ENCODE measurements at regions of chr7 and their contacts with region 1.

Region 1: DNA sequence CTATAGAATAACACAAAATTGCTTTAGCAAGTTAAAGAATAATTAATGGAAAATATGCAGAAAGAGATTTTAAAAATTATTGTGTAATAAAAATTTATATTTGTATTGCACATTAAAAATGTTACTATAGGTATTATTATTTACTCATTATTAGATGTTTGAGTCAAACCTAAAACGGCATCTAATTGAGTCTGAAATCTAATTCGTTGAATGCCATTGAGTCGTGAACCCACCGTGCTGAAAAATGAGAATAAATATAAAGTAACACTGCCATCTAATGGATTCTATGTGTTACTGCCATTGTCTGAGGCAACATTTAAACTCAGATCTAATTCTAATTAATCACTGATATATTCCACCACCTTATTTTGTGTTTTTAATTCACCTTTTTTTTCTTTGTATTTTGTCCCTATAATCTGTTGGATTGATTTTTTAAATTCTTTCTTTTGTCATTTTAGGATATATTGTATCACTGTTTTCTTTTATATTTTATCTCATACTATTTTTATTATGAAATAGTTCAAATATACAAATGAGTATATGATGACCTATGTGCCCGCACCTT is 62.2 kb downstream of the SAMD9 start:
- DNase-seq: no peak
- H3K4me3 Mint-ChIP-seq: no peak overlapping the region
- H3K27ac Mint-ChIP-seq: no peak overlapping the region
- H3K4me1 Mint-ChIP-seq: peaks cover 9% of the 10 kb centered on the region
- H3K27me3 Mint-ChIP-seq: no peaks in the 10 kb centered on the region
- CTCF ChIP-seq: no peak

Region 2: DNA sequence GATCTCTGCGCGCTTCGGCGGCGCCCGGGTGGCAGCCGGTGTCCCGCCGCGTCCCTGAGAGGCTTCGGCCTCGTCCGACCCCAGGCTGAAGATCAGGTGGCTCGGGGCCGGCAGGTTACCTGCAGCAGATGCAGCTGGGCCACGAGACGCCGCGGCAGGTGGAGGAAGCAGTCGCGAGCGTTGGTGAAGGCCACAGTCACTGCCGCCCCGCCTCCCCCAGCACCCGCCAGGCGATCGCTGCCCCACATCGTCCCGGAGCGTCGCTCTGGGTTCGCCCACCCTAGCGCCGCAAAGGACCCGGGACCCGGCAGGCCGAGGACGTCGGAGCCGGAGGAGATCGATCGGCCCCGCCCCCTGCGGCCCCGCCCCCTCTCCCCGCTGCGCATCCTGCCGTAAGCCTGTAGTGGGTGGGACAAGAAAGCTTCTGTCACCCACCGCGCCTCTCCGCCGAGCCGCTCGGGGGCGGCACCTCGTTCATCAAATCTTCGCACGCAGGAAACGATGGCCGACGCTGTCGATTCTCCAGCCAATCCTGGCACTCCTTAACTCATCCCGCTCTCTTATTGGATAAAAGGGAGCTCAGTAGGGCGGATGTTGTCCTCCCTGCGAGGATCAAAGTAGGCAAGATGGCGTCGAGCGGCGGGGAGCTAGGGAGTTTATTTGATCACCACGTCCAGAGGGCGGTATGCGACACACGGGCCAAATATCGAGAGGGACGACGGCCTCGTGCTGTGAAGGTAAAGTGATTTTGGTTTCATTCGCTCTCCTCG is 527.3 kb before region 1 on chr7 and contains the starts of genes PEX1 and RBM48:
- CTCF ChIA-PET with region 1: interaction called, 3 read pairs
- intact Hi-C with region 1: loop called (anchors 10 kb)
- DNase-seq: peak; percentile 88
- H3K4me3 Mint-ChIP-seq: peak within 1 kb of the TSS; percentile 85
- H3K27ac Mint-ChIP-seq: peak within 1 kb of the TSS; percentile 99
- H3K4me1 Mint-ChIP-seq: peaks cover 14% of the 10 kb centered on the region
- H3K27me3 Mint-ChIP-seq: no peaks in the 10 kb centered on the region
- CTCF ChIP-seq: no peak
- total RNA-seq, gene PEX1: 10.1 and 10.4 TPM in 2 replicates
- total RNA-seq, gene RBM48: 8.2 and 10.9 TPM in 2 replicates

Region 3: DNA sequence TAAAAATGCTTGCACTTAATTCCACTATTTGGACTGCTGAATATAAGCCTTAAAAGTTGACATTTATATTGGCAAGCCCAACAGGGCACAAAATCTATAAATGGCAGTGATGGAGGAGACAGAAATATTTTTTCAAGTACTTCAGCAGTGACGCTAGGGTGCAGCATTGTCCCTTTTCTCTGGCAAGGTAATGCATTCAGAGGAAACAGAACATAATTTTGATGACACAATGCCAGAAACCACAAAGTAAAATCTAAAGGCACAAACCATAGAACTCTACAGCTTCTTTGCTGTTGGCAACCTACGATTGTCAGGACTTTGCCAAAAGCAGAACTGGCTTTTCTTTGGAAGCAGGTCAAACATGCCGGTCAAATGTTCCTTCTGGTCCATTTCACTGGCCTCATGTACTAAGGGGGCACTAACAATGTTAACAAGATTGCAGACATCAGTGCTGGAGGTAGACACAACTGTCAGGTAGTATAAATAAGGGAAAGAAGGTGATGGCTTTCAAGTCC is 434.5 kb before region 1 on chr7:
- CTCF ChIA-PET with region 1: no interaction called
- intact Hi-C with region 1: loop called (anchors 1 kb)
- DNase-seq: peak; percentile 69
- H3K4me3 Mint-ChIP-seq: no peak overlapping the region
- H3K27ac Mint-ChIP-seq: no peak overlapping the region
- H3K4me1 Mint-ChIP-seq: peaks cover 28% of the 10 kb centered on the region
- H3K27me3 Mint-ChIP-seq: no peaks in the 10 kb centered on the region
- CTCF ChIP-seq: peak; percentile 30